GM12878 (cell line): ENCODE measurements at regions of chr12 and their contacts with region 1.

Region 1: GRCh38 chr12:13362260-13362841 is 165.8 kb downstream of the EMP1 start:
- DNase-seq: no peak
- ATAC-seq: peak; percentile 100
- H3K4me3 ChIP-seq: no peak overlapping the region
- H3K27ac ChIP-seq: no peak overlapping the region
- H3K4me1 ChIP-seq: no peaks in the 10 kb centered on the region
- H3K27me3 ChIP-seq: peaks cover 0 to 3% of the 10 kb centered on the region in 2 experiments; a peak in 1 of 4 replicates
- CTCF ChIP-seq: peak; percentile 71 to 94 (median 91)
- EP300 ChIP-seq: no peak
- POLR2A ChIP-seq: no peak
- RAD21 ChIP-seq: peak; percentile 80

Region 2: DNA sequence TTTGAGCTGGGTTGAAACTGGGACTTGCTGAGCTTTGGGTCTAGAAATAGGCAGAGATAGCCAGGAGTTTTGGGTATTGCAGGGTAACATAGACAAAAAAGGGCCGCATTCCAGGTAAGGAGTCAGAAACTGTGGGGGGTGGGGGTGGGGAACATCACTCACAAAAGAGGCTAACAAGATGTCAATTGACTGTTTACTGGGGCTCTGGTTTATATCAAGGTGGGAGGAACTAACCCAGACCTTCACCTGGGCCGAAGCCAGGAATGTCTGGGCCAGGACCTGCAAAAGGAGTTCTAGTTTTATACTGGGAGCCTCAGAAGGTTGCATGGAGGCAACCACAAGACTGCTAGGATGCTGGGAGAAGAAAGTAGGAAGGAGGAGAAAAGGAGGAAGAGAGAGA is 11.4 kb before region 1 on chr12:
- CTCF ChIA-PET with region 1: interaction called, 12 read pairs
- POLR2A ChIA-PET with region 1: no interaction called
- RAD21 ChIA-PET with region 1: interaction called, 3 read pairs
- SMC1A ChIA-PET with region 1: interaction called, 3 read pairs
- in situ Hi-C with region 1: no loop called
- intact Hi-C with region 1: no loop called
- DNase-seq: no peak
- ATAC-seq: no peak
- H3K4me3 ChIP-seq: no peak overlapping the region
- H3K27ac ChIP-seq: no peak overlapping the region
- H3K4me1 ChIP-seq: no peaks in the 10 kb centered on the region
- H3K27me3 ChIP-seq: no peaks in the 10 kb centered on the region; a peak in 3 of 4 replicates
- CTCF ChIP-seq: no peak
- EP300 ChIP-seq: no peak
- POLR2A ChIP-seq: no peak
- RAD21 ChIP-seq: no peak

Region 3: GRCh38 chr12:13602172-13602571 is 239.8 kb after region 1 on chr12:
- CTCF ChIA-PET with region 1: interaction called, 10 read pairs
- POLR2A ChIA-PET with region 1: no interaction called
- RAD21 ChIA-PET with region 1: interaction called, 3 read pairs
- SMC1A ChIA-PET with region 1: no interaction called
- in situ Hi-C with region 1: no loop called
- intact Hi-C with region 1: no loop called
- DNase-seq: no peak
- ATAC-seq: no peak
- H3K4me3 ChIP-seq: no peak overlapping the region
- H3K27ac ChIP-seq: no peak overlapping the region
- H3K4me1 ChIP-seq: no peaks in the 10 kb centered on the region
- H3K27me3 ChIP-seq: no peaks in the 10 kb centered on the region
- CTCF ChIP-seq: no peak
- EP300 ChIP-seq: no peak
- POLR2A ChIP-seq: no peak
- RAD21 ChIP-seq: no peak

Region 4: DNA sequence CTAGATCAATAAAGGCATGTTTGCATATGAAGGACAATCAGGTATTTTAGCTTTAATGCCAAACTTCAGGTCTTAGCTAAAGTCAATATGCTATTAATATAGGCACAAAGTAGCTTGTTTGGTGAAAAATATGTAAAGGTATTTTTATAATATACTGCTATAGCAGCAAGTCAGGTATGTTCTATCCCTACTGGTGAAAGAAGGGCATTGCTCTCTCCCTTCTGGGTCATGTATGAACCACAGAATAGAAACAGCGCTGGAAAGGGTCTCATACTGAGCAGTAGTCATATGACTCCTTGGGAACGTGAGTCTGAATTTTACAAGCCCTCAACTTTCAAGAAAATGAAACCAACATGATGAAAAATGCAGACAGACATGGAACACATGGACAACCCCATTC is 304.5 kb after region 1 on chr12:
- CTCF ChIA-PET with region 1: interaction called, 69 read pairs
- POLR2A ChIA-PET with region 1: no interaction called
- RAD21 ChIA-PET with region 1: interaction called, 38 read pairs
- SMC1A ChIA-PET with region 1: interaction called, 29 read pairs
- in situ Hi-C with region 1: loop called (anchors 5 kb)
- intact Hi-C with region 1: no loop called
- DNase-seq: no peak
- ATAC-seq: peak; percentile 74
- H3K4me3 ChIP-seq: no peak overlapping the region
- H3K27ac ChIP-seq: no peak overlapping the region
- H3K4me1 ChIP-seq: no peaks in the 10 kb centered on the region
- H3K27me3 ChIP-seq: no peaks in the 10 kb centered on the region; a peak in 2 of 4 replicates
- CTCF ChIP-seq: peak in 2 of 3 experiments; percentile 24 to 39; a peak in 2 of 6 replicates
- EP300 ChIP-seq: no peak
- POLR2A ChIP-seq: no peak
- RAD21 ChIP-seq: no peak